Heart left ventricle (tissue), 16 donors: ENCODE measurements at regions of chr10 and their contacts with region 1.

Region 1: GRCh38 chr10:68720793-68721672 is at the start of gene CCAR1:
- DNase-seq: peak; percentile 97 to 98 (median 98)
- ATAC-seq: peak; percentile 99 to 100 (median 100)
- H3K4me3 ChIP-seq: peak within 1 kb of the TSS; percentile 66 to 100 (median 90)
- H3K27ac ChIP-seq: peak within 1 kb of the TSS; percentile 74 to 97 (median 94)
- H3K4me1 ChIP-seq: peaks cover 0 to 17% (median 9%) of the 10 kb centered on the region in 12 donors
- H3K27me3 ChIP-seq: no peaks in the 10 kb centered on the region
- CTCF ChIP-seq: no peak
- POLR2A ChIP-seq: peak in 1 of 2 donors; percentile 61
- total RNA-seq, gene CCAR1: 21.7 to 37.9 (median 28.3) TPM

Region 2: DNA sequence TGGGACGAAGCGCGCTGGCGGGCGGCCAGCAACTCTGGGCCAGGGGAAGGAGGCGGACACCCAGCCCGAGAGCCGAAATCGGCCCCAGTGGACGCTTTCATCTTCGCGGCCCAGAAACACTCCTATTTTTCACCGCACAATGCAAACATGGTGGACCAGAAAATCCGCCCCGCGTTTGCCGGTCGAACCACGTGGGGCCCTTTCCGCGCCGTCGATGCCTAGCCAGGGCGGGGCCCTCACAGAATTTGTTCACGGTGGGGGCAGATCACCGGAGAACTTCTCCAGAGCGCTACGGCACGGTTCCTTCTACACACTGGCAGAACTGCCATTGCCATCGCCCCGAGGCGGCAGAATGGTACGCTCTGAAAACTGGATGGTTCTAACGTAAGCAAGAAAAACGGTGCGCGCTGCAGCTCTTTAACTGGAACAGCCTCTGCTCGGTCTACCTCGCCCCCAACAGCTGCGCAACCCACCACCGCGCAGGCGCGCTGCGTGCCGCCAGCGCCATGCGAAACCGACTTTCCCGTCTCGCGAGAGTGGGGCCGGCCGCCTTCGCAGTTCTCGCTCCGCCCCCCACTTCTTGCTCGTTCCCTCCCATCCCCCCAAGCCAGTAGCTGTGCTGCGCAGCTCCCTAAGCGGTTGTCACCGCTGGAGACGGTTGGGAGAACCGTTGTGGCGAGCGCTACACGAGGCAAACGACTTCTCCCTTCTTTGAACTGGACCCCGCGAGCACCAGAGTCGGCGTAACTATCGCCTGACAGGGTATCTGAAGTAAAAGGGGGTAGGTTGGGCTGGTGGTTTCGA is 389.4 kb before region 1 on chr10 and contains the start of gene HNRNPH3:
- intact Hi-C with region 1: loop called in 1 of 10 experiments (anchors 10 kb)
- DNase-seq: peak; percentile 98 to 99 (median 99)
- ATAC-seq: peak; percentile 85 to 94 (median 92)
- H3K4me3 ChIP-seq: peak within 1 kb of the TSS; percentile 70 to 98 (median 90)
- H3K27ac ChIP-seq: peak within 1 kb of the TSS; percentile 95 to 100 (median 99)
- H3K4me1 ChIP-seq: peaks cover 7 to 64% (median 36%) of the 10 kb centered on the region in 12 donors
- H3K27me3 ChIP-seq: no peaks in the 10 kb centered on the region
- CTCF ChIP-seq: peak in 4 of 12 donors; percentile 6 to 16 (median 14)
- POLR2A ChIP-seq: peak; percentile 74 to 99
- total RNA-seq, gene HNRNPH3: 23.7 to 130 (median 83.1) TPM

Region 3: DNA sequence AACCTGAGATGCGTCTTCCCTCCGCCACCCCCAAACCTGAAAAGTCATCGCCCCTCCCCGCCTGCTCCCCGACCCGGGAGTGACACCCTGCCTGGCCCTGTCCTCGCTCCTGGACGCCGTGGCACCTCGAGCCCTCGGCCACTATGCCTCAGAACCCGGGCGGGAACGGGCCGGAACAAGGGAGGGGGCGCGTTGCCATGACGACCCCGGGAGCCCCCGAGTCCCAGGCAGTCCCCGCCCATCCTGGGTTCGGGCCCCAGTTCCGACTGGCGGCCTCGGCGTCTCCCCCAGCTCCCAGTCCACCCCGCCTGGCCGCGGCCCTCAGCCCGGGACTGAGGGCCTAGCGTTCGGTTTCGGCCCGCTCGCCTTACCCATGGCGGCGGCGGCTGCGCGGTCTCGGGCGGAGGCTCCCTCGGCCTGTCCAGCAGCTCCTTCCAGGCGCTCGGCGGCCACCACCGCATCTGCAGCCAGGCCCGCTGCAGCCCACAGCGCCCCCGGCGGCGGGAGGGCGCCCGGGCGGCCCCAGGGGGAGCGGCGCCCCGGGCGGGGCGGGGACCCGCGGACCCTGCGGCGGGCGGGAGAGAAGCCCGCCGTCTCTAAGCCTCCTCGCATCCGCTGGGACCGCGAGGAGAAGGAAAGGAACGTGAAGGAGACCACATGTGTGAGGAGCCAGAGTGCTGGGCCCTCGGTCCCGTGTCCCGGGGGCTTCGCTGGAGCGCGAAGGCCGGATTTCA is 314.1 kb before region 1 on chr10 and contains the start of gene RUFY2:
- intact Hi-C with region 1: loop called in 1 of 10 experiments (anchors 2 kb)
- DNase-seq: peak; percentile 79 to 91 (median 82)
- ATAC-seq: peak; percentile 79 to 98 (median 96)
- H3K4me3 ChIP-seq: peak within 1 kb of the TSS; percentile 69 to 100 (median 96)
- H3K27ac ChIP-seq: peak within 1 kb of the TSS; percentile 86 to 96 (median 93)
- H3K4me1 ChIP-seq: peaks cover 0 to 30% (median 6%) of the 10 kb centered on the region in 12 donors
- H3K27me3 ChIP-seq: no peaks in the 10 kb centered on the region
- CTCF ChIP-seq: peak in 11 of 12 donors; percentile 21 to 100 (median 80)
- POLR2A ChIP-seq: peak in 1 of 2 donors; percentile 61
- total RNA-seq, gene RUFY2: 5.6 to 11.8 (median 8.9) TPM

Region 4: GRCh38 chr10:68526626-68527307 is 194.3 kb before region 1 on chr10:
- intact Hi-C with region 1: loop called in 2 of 10 experiments (anchors 1 to 5 kb)
- DNase-seq: no peak
- ATAC-seq: peak in 2 of 4 donors; percentile 74 to 77
- H3K4me3 ChIP-seq: peak overlapping the region; percentile 71 to 100 (median 91)
- H3K27ac ChIP-seq: peak overlapping the region; percentile 66 to 98 (median 92)
- H3K4me1 ChIP-seq: peaks cover 0 to 14% (median 5%) of the 10 kb centered on the region in 12 donors
- H3K27me3 ChIP-seq: no peaks in the 10 kb centered on the region
- CTCF ChIP-seq: no peak
- POLR2A ChIP-seq: no peak

Region 5: GRCh38 chr10:68550747-68551411 is 170.2 kb before region 1 on chr10:
- intact Hi-C with region 1: loop called in 5 of 10 experiments (anchors 5 to 10 kb)
- DNase-seq: peak in 3 of 5 donors; percentile 30 to 43 (median 36)
- ATAC-seq: peak in 3 of 4 donors; percentile 72 to 87 (median 74)
- H3K4me3 ChIP-seq: no peak overlapping the region
- H3K27ac ChIP-seq: no peak overlapping the region
- H3K4me1 ChIP-seq: no peaks in the 10 kb centered on the region
- H3K27me3 ChIP-seq: no peaks in the 10 kb centered on the region
- CTCF ChIP-seq: peak; percentile 64 to 86 (median 76)
- POLR2A ChIP-seq: no peak

Region 6: DNA sequence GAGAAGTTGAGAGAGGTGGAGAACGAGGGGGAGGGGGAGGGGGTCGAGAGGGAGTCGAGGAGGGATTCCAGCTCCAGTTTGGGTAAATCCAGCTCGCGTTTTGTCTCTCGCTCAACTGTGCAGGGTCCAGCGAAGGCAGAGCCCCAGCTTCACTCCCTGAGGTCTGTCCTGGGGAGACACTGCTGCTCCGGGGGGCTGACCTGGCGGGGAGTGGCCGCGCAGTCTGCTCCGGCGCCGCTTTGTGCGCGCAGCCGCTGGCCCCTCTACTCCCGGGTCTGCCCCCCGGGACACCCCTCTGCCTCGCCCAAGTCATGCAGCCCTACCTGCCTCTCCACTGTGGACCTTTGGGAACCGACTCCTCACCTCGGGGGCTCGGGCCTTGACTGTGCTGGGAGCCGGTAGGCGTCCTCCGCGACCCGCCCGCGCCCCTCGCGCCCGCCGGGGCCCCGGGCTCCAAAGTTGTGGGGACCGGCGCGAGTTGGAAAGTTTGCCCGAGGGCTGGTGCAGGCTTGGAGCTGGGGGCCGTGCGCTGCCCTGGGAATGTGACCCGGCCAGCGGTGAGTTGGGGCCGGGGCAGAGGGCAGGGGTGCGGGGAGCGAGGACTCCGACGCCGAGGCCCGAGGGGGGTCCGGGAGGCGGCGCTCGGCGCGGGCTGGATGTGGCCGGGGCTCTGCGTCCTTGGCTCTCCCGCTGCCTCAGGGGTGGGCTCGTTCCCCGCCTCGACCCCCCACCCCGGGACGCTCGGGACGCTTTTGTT is 160.7 kb before region 1 on chr10 and contains the start of gene TET1:
- intact Hi-C with region 1: loop called in 4 of 10 experiments (anchors 5 to 10 kb)
- DNase-seq: peak; percentile 30 to 68 (median 43)
- ATAC-seq: peak in 3 of 4 donors; percentile 55 to 81 (median 79)
- H3K4me3 ChIP-seq: peak within 1 kb of the TSS; percentile 61 to 91 (median 74)
- H3K27ac ChIP-seq: peak within 1 kb of the TSS in 7 of 12 donors; percentile 3 to 63 (median 32)
- H3K4me1 ChIP-seq: peaks cover 0 to 27% (median 7%) of the 10 kb centered on the region in 12 donors
- H3K27me3 ChIP-seq: peaks cover 0 to 46% (median 9%) of the 10 kb centered on the region in 9 donors
- CTCF ChIP-seq: no peak
- POLR2A ChIP-seq: no peak
- total RNA-seq, gene TET1: 1.3 to 4.1 (median 2.6) TPM

Region 7: GRCh38 chr10:68600041-68600778 is 120.8 kb before region 1 on chr10:
- intact Hi-C with region 1: loop called in 1 of 10 experiments (anchors 2 kb)
- DNase-seq: peak; percentile 61 to 80 (median 64)
- ATAC-seq: peak; percentile 93 to 95 (median 94)
- H3K4me3 ChIP-seq: peak overlapping the region; percentile 22 to 66 (median 56)
- H3K27ac ChIP-seq: peak overlapping the region; percentile 2 to 88 (median 70)
- H3K4me1 ChIP-seq: peaks cover 2 to 40% (median 23%) of the 10 kb centered on the region in 12 donors
- H3K27me3 ChIP-seq: no peaks in the 10 kb centered on the region
- CTCF ChIP-seq: no peak
- POLR2A ChIP-seq: no peak